CD4-positive, alpha-beta T cell (primary cell): ENCODE measurements at regions of chr5 and their contacts with region 1.

Region 1: GRCh38 chr5:172733131-172733973 is 37.6 kb downstream of the DUSP1 start:
- DNase-seq: no peak
- ATAC-seq: no peak
- H3K4me3 ChIP-seq: no peak overlapping the region
- H3K4me3 Mint-ChIP-seq: no peak overlapping the region
- H3K27ac ChIP-seq: no peak overlapping the region
- H3K27ac Mint-ChIP-seq: no peak overlapping the region
- H3K4me1 ChIP-seq: peaks cover 9% of the 10 kb centered on the region
- H3K4me1 Mint-ChIP-seq: no peaks in the 10 kb centered on the region
- H3K27me3 ChIP-seq: no peaks in the 10 kb centered on the region
- H3K27me3 Mint-ChIP-seq: no peaks in the 10 kb centered on the region
- CTCF ChIP-seq: no peak

Region 2: GRCh38 chr5:172720655-172721054 is 12.7 kb before region 1 on chr5:
- CTCF ChIA-PET with region 1: no interaction called
- POLR2A ChIA-PET with region 1: no interaction called
- intact Hi-C with region 1: no loop called
- DNase-seq: no peak
- ATAC-seq: no peak
- H3K4me3 ChIP-seq: no peak overlapping the region
- H3K4me3 Mint-ChIP-seq: no peak overlapping the region
- H3K27ac ChIP-seq: no peak overlapping the region
- H3K27ac Mint-ChIP-seq: no peak overlapping the region
- H3K4me1 ChIP-seq: peaks cover 33% of the 10 kb centered on the region
- H3K4me1 Mint-ChIP-seq: peaks cover 14% of the 10 kb centered on the region
- H3K27me3 ChIP-seq: no peaks in the 10 kb centered on the region
- H3K27me3 Mint-ChIP-seq: no peaks in the 10 kb centered on the region
- CTCF ChIP-seq: no peak

Region 3: DNA sequence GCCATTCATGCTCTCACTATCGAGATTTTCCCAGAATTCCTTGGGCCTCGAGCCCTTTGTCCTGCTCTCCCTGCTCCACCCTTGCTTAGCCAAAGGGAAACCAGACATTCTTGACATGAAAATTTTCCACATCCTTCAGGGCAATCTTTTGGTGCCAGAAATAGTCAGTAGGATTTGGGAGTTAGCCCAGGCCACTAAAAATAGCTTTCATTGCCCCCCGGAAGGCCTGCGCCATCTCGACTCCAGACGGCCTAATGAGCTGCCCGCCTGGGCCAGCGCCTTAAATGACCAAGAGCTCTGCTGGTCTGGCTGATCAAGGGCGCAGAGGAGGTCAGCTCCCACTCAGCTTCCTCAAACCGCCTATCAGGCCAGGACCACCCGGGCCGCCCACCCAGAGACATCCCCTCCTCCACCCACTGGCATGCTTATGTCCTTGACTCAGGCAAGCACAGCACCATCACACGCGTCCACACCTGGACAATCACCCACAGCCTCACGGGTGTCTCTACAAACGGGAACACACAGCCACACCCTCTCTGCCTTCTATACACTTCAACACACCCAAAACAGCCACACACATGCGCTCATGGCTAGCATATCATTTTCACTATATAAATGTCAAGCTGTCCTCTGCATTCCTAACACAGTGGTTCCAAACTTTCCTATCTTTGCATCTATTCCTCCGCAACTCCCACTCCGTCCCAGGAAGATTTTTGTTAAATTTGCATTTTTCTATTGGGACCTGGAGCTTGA is 16.7 kb after region 1 on chr5:
- CTCF ChIA-PET with region 1: no interaction called
- POLR2A ChIA-PET with region 1: no interaction called
- intact Hi-C with region 1: loop called in 1 of 2 experiments (anchors 2 kb)
- DNase-seq: no peak
- ATAC-seq: no peak
- H3K4me3 ChIP-seq: no peak overlapping the region
- H3K4me3 Mint-ChIP-seq: no peak overlapping the region
- H3K27ac ChIP-seq: no peak overlapping the region
- H3K27ac Mint-ChIP-seq: no peak overlapping the region
- H3K4me1 ChIP-seq: peaks cover 3% of the 10 kb centered on the region
- H3K4me1 Mint-ChIP-seq: no peaks in the 10 kb centered on the region
- H3K27me3 ChIP-seq: no peaks in the 10 kb centered on the region
- H3K27me3 Mint-ChIP-seq: no peaks in the 10 kb centered on the region
- CTCF ChIP-seq: no peak